A673 (cell line): ENCODE measurements at regions of chr1 and their contacts with region 1.

Region 1: DNA sequence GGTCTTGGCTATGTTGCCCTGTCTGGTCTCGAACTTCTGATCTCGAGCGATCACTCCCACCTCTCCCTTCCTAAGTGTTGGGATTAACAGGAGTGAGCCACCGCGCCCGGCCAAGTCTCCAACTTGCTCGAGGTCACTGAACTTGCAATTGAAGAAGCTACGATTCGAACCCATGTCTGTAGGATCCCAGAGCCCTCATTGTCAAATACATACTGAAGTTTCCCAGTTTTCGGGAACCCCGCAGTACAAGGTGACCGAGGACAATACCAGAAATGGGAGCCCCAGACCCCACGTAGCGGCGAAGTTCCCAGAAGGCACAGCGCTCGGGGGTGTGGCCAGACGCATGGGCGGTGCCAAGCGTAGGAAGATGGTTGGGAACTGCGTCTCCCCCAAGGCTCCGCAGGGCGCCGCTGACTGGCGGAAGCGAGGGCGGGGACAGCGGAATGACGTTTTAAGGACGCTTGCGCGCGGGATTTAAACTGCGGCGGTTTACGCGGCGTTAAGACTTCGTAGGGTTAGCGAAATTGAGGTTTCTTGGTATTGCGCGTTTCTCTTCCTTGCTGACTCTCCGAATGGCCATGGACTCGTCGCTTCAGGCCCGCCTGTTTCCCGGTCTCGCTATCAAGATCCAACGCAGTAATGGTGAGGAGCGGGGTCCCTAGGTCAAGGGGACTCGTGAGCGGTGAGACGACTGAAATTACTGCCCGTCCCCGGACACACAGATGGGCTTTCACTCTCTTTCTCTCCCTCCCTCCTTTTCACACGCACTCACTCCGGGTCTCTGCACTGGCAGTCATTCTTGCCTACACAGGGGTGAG is at the start of gene KIF2C:
- DNase-seq: peak; percentile 99
- H3K4me3 ChIP-seq: peak within 1 kb of the TSS; percentile 91
- H3K27ac ChIP-seq: peak within 1 kb of the TSS; percentile 96
- H3K4me1 ChIP-seq: peaks cover 30% of the 10 kb centered on the region
- H3K27me3 ChIP-seq: no peaks in the 10 kb centered on the region
- CTCF ChIP-seq: no peak
- total RNA-seq, gene KIF2C: 127 and 136 TPM in 2 replicates

Region 2: DNA sequence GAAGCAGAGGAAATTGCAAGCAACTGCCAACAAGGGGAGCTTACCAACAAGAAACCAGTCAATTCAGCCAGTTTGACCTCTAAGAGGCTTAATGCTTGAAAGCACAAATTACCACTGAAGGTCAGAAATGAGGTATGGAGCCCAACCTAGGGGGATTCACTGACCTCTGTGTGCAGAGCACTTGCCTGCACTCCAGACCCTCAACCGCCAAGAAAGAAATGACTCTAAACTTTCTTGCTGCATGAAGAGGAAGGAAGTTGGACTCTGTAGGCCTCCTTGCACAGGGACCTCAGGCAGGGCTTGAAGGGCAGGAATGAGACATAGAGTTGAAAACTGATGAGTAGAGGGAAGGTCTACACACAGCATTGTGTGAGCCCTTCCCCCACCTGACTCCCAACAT is 55.0 kb before region 1 on chr1:
- CTCF ChIA-PET with region 1: no interaction called
- POLR2A ChIA-PET with region 1: no interaction called
- intact Hi-C with region 1: no loop called
- DNase-seq: no peak
- H3K4me3 ChIP-seq: no peak overlapping the region
- H3K27ac ChIP-seq: no peak overlapping the region
- H3K4me1 ChIP-seq: peaks cover 2% of the 10 kb centered on the region
- H3K27me3 ChIP-seq: no peaks in the 10 kb centered on the region
- CTCF ChIP-seq: no peak

Region 3: DNA sequence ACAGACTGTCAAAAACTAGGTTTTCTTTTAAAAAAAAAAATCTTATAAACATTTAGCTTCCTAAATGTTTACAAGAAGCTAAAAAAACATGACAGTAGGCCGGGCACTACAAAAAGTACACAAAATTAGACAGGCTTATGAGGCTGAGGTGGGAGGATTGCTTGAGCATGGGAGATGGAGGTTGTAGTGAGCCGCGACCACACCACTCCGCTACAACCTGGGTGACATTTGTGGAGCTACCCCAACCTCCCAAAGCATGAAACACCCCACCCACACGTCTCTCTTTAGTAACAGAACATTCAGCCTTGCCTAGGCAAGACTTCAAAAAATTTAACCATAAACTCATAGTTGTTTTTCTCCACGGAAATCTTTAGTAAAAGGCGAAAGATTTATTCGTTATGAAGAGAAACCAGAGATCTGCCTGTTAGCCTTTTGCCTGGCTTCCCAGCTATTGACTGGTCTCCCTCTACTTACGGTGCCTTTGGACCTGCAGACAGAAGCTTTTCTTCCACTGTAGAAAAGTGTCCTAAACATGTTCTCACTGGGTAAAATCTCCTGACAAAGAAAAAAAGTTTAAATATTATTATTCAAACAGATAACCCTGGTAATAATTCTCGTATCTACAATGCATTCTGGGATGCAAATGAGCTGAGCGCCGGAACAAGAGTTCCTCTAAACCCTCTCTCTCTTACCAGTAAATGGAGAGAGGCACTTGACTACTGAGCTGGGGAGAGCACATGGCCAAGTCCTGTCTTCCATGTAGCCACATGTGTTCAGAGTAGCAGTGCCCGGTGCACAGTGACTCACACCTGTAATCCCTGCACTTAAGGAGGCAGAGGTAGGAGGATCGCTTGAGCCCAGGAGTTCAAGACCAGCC is 17.8 kb before region 1 on chr1:
- CTCF ChIA-PET with region 1: no interaction called
- POLR2A ChIA-PET with region 1: interaction called, 15 read pairs
- intact Hi-C with region 1: no loop called
- DNase-seq: peak; percentile 98
- H3K4me3 ChIP-seq: no peak overlapping the region
- H3K27ac ChIP-seq: peak overlapping the region; percentile 95
- H3K4me1 ChIP-seq: peaks cover 3% of the 10 kb centered on the region
- H3K27me3 ChIP-seq: no peaks in the 10 kb centered on the region
- CTCF ChIP-seq: no peak; the same call in 1 of the 2 replicates

Region 4: GRCh38 chr1:44775078-44775929 is 35.7 kb after region 1 on chr1 and contains the start of gene RPS8:
- CTCF ChIA-PET with region 1: no interaction called
- POLR2A ChIA-PET with region 1: interaction called, 3 read pairs
- intact Hi-C with region 1: loop called (anchors 5 kb)
- DNase-seq: peak; percentile 97
- H3K4me3 ChIP-seq: peak within 1 kb of the TSS; percentile 90
- H3K27ac ChIP-seq: peak within 1 kb of the TSS; percentile 94
- H3K4me1 ChIP-seq: peaks cover 7% of the 10 kb centered on the region
- H3K27me3 ChIP-seq: no peaks in the 10 kb centered on the region
- CTCF ChIP-seq: no peak
- total RNA-seq, gene RPS8: 1,717 and 1,734 TPM in 2 replicates

Region 5: DNA sequence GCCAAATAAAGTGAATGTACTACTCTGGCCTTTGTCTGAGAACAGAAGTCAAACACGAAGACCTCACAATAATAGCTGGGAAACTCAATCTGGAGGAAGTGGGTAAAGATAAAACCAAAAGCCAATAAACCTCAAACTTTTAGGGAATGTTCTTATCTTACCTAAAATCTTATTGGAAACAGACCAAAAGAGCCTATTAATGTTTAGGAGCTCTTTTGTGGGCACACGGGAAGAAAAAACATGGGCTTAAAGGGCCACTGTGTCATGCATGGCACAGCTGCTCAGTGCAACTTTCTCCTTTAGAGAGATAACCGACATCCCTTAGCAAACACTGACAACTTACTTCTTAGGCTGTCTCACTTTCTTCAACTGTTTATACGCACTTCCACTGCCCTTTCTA is 230.7 kb after region 1 on chr1:
- CTCF ChIA-PET with region 1: no interaction called
- POLR2A ChIA-PET with region 1: no interaction called
- intact Hi-C with region 1: no loop called
- DNase-seq: no peak
- H3K4me3 ChIP-seq: no peak overlapping the region
- H3K27ac ChIP-seq: peak overlapping the region; percentile 8
- H3K4me1 ChIP-seq: no peaks in the 10 kb centered on the region
- H3K27me3 ChIP-seq: no peaks in the 10 kb centered on the region
- CTCF ChIP-seq: no peak